Head of caudate nucleus (tissue), 42 donors: ENCODE measurements at regions of chr3 and their contacts with region 1.

Region 1: GRCh38 chr3:141452036-141452435 is 34.8 kb upstream of the RASA2 start:
- DNase-seq: peak in 8 of 42 donors; percentile 31 to 73 (median 48)

Region 2: GRCh38 chr3:141311496-141312353 is 140.3 kb before region 1 on chr3:
- intact Hi-C with region 1: loop called (anchors 5 kb)
- DNase-seq: peak; percentile 96 to 100 (median 99)

Region 3: DNA sequence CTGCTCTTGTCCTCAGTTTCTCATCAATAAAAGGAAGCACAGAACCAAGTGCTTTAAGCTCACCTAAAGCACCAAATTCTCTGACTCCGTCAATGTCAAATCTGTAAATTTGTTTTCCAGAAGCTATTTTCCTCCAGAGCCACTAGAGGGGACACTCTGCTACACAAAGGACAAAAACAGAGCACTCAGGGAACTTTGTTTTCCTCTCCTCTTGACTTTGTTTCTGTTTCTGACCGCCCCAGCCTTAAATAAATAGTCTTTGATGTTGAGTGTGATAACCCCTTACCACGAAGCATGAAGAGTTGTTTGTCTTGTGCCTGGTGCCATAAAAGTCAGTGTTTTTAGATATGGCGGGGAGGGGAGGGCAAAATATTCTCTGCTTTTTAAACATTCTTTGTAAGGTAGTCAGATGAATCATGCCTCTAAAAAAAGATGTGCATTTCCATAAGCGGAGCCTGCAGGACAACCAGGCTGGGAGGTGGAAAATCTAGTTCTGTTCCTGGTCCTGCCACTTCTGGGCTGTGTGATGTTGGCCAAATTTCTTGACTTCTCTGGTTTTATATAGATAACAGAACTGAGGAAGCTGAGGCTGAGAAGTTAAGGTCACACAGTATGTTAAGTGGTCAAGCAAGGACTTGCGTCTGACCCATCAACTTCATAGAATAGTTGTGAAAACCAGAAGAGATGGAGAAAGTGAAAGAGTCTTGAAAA is 91.0 kb before region 1 on chr3:
- intact Hi-C with region 1: loop called (anchors 5 kb)
- DNase-seq: peak in 5 of 42 donors; percentile 27 to 59 (median 33)